ENCODE measurements at regions of chr6 and their contacts with region 1.

Region 1: GRCh38 chr6:39302669-39303424 is 11.4 kb downstream of the KCNK17 start:
- H3K4me3 ChIP-seq: no peak overlapping the region
- H3K27ac ChIP-seq: no peak overlapping the region
- H3K4me1 ChIP-seq: no peaks in the 10 kb centered on the region
- CTCF ChIP-seq: peak; percentile 96

Region 2: GRCh38 chr6:38997128-38997761 is 305.6 kb before region 1 on chr6:
- CTCF ChIA-PET with region 1: interaction called, 33 read pairs
- POLR2A ChIA-PET with region 1: no interaction called
- H3K4me3 ChIP-seq: no peak overlapping the region
- H3K27ac ChIP-seq: no peak overlapping the region
- H3K4me1 ChIP-seq: no peaks in the 10 kb centered on the region
- CTCF ChIP-seq: peak; percentile 42

Region 3: DNA sequence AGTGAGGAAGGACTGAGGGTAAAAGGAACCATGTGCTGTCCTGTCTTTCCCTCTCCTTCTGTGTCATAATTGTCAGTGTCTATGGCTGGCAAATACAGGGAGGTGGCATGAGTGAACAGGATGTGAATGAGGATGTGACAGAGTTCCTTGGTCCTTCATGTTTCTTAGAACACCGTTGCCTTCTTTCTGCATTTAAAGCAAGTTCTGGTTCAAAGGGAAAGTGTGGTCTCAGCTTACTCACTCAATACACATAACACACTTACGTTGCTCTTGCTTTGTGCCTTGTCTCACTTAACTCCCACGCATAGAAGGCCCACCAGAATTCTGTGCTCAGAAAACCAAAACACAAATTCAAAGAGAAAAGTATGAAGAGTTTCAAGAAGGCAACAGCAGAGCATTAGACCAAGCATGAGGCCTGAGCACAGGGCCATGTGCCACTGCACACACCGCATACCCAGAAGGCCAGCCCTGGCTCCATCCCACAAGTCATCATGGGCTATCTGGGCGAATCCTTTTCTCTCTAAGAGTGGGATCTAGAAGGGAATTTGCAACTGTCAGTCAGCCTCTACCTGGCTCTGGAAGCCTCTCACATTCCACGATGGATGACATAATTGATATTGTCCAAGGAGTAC is 149.0 kb before region 1 on chr6:
- CTCF ChIA-PET with region 1: interaction called, 14 read pairs
- POLR2A ChIA-PET with region 1: no interaction called
- H3K4me3 ChIP-seq: no peak overlapping the region
- H3K27ac ChIP-seq: no peak overlapping the region
- H3K4me1 ChIP-seq: peaks cover 6% of the 10 kb centered on the region; the same call in 1 of the 2 replicates
- CTCF ChIP-seq: no peak

Region 4: DNA sequence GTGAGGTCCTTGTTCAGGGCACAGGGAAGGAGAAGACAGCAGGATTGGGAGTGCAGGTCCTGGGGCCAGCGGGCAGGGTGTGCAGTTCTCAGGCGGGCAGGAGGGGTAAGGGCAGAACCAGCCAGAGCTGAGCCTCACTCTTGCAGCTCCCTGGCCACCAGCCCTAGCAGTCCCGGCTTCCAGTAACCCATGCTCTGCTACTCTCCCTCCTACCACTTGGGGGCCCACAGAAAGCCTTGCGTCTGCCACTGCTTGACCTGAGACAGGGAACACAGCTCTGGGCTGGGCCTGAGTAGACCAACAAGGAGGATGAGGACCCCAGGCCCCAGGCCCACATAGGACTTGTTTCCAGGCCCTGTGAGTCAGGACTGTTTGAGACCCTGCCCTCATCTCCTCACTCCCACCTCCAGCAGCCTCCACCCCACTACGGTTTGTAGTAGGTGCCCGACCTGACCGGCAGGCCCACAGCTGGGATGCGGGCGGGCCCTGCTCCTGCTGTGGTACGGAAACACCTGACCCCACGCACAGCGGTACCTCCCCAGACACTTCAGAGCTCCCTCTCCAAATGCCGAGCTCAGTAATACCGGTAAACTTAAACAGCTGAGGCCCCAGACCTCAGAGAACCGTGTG is 112.8 kb before region 1 on chr6:
- CTCF ChIA-PET with region 1: interaction called, 37 read pairs
- POLR2A ChIA-PET with region 1: no interaction called
- H3K4me3 ChIP-seq: no peak overlapping the region
- H3K27ac ChIP-seq: no peak overlapping the region
- H3K4me1 ChIP-seq: no peaks in the 10 kb centered on the region
- CTCF ChIP-seq: peak; percentile 73

Region 5: DNA sequence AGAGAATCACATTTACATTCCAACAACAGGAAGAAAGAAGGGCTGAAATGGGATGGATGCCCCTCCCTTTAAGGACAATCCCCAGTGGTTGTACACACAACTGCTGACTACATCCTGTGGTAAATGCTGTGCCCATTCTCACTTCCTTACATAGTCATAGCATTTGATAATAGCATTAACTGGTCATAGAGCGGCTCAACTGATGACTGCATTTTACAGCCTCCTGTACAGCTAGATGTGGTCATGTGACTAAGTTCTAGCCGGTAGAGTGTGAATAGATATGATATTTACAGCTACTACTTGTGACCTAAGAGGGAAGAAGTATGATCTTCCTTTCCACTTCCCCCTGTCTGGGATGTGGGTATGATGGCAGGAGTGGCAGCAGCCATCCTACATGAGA is 13.4 kb before region 1 on chr6:
- CTCF ChIA-PET with region 1: interaction called, 27 read pairs
- POLR2A ChIA-PET with region 1: interaction called, 5 read pairs
- H3K4me3 ChIP-seq: no peak overlapping the region
- H3K27ac ChIP-seq: no peak overlapping the region
- H3K4me1 ChIP-seq: 0 out of 2 replicates have a peak, but pooled peaks cover 2% of the 10 kb centered on the region
- CTCF ChIP-seq: no peak

Measured in HEK293 (cell line).